Aorta (tissue), 5 donors: ENCODE measurements at regions of chr6 and their contacts with region 1.

Region 1: GRCh38 chr6:28080631-28081485 is 490 bp downstream of the ZNF165 start:
- DNase-seq: peak; percentile 96
- ATAC-seq: peak; percentile 99
- H3K4me3 ChIP-seq: peak overlapping the region; percentile 64 to 71
- H3K27ac ChIP-seq: peak overlapping the region in 1 of 2 donors; percentile 29
- H3K4me1 ChIP-seq: peaks cover 0 to 2% of the 10 kb centered on the region in 2 donors
- H3K27me3 ChIP-seq: no peaks in the 10 kb centered on the region

Region 2: GRCh38 chr6:28124102-28124970 is 43.5 kb after region 1 on chr6 and contains the start of gene ZSCAN16:
- intact Hi-C with region 1: loop called in 1 of 2 experiments (anchors 5 kb)
- DNase-seq: peak; percentile 85 to 94
- ATAC-seq: peak; percentile 95
- H3K4me3 ChIP-seq: peak within 1 kb of the TSS; percentile 33 to 65
- H3K27ac ChIP-seq: peak within 1 kb of the TSS in 1 of 2 donors; percentile 55
- H3K4me1 ChIP-seq: no peaks in the 10 kb centered on the region
- H3K27me3 ChIP-seq: no peaks in the 10 kb centered on the region
- total RNA-seq, gene ZSCAN16: 4.4 to 5.0 TPM

Region 3: DNA sequence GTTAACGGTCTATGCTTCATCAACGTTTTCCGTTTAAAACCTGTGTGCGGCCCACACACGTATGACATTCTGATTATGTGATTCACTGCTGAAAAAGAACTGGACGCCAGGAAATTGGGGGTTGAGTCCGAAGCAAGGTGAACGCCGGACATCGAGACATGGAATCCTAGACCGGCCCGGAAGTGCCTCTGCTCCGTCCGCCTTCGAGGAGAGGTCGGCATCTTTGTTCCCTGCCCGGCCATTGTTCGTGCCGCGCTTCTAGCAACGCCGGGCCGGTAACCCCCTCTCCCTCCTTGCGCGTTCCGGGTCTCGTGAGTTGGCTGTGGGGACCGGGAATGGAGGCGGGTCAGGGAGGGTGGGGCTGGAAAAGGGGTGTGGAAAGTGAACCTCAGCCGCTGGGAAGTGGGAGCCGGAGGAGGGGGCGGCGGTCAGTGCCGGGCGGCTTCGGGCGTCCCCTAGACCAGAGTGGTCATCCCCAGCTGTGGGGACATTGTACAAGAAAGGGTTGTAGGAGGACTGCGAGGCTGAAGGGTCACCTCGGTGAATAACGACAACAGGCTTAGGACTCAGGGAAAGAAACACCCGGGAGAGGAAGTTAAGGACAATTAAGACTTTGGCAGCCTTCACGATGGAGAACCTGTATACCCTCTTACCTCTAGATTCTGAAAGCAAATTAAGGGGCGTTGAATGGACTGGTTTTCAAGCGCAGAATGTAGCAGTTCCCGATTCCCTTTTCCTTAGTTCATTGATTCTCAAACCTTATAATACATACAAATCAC is 144.4 kb after region 1 on chr6 and contains the start of gene ZSCAN9:
- intact Hi-C with region 1: loop called (anchors 5 to 10 kb)
- DNase-seq: peak; percentile 90 to 95
- ATAC-seq: peak; percentile 96
- H3K4me3 ChIP-seq: peak within 1 kb of the TSS; percentile 12 to 89
- H3K27ac ChIP-seq: peak within 1 kb of the TSS in 1 of 2 donors; percentile 3
- H3K4me1 ChIP-seq: peaks cover 2 to 3% of the 10 kb centered on the region in 2 donors
- H3K27me3 ChIP-seq: no peaks in the 10 kb centered on the region
- total RNA-seq, gene ZSCAN9: 15.4 to 18.5 TPM

Region 4: DNA sequence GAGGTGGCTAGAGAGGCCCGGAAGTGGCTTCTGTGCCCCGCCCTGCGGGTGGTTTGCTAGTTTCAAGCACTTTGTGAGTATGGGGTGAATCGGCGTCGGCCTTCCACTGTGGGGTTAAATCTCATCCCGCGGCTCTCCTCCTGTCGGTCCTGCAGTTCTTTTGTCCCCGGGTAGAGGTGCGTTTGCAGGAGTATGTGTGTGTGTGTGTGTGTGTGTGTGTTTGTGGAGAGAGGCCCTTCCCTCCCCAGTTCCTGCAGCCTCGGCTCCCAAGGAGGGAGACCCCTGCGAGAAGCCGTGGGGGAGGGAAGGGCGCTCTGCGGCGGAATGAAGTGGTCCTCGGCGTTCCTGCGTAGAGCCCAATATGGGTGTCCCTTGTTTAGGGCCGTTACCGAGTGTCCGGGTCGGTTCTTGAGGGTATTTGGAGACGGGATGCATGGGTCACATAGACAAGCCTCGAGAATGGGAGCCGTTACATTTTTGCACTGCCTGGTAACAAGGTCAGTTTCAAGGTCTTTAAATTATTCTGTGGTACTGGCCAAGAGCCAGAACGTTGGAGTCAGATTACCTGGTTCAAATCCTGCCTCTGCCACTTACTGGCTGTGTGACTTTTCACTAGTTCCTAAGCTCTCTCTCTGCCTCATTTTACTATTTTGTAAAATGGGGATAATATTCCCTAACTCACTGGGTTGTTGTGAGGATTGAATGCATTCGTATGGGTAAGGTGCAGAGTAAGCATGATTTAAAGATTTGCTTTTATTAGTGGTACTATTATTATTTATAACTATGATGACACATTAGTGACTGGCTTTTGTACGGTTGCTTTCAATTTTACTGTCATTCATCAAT is 269.3 kb after region 1 on chr6 and contains the start of gene ZKSCAN3:
- intact Hi-C with region 1: no loop called
- DNase-seq: peak; percentile 90 to 91
- ATAC-seq: peak; percentile 94
- H3K4me3 ChIP-seq: peak within 1 kb of the TSS; percentile 55 to 83
- H3K27ac ChIP-seq: peak within 1 kb of the TSS in 1 of 2 donors; percentile 66
- H3K4me1 ChIP-seq: no peaks in the 10 kb centered on the region
- H3K27me3 ChIP-seq: no peaks in the 10 kb centered on the region
- total RNA-seq, gene ZKSCAN3: 4.2 to 8.6 TPM